Astrocyte of the cerebellum (primary cell): ENCODE measurements at regions of chr4 and their contacts with region 1.

Region 1: DNA sequence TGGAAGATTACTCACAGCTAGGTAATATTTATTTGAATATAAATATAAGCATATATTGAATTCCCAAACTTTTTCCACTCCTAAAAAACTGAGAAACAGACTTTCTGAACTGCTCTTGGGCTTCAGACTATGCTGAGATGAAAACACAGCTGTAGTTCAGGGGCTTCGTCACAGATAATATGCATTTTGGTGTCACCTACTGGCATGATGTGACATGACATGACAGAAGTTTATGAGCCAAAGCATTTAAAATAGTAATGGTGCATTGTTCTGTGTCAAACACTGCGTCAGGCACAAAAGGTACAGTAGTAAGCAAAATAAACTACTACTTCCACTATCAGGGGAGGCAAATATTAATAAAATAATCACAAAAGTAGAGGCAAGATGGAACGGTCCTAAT is 171.3 kb downstream of the BTC start:
- DNase-seq: peak; percentile 19
- H3K4me3 ChIP-seq: no peak overlapping the region
- CTCF ChIP-seq: peak; percentile 36

Region 2: DNA sequence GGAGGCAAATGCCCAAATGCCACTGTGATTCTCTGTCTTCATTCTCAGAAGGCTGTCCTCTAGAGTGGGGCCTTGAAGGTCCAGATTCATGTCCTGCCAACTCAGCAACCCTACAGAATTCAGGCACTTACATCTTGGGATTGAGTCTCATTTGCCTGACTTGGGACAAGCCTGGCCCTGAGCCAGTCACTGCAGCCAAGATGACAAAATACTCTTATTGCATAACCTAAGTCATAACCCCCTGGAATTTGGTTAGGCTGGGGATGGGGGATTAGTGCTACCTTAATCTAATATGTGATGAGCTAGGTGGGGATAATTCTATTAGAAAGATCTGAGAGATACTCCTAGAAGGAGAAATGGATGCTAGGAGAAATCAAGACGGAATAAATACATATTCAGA is 77.6 kb before region 1 on chr4:
- in situ Hi-C with region 1: loop called (anchors 5 kb)
- DNase-seq: no peak
- H3K4me3 ChIP-seq: no peak overlapping the region
- CTCF ChIP-seq: no peak